ENCODE measurements at regions of chr12 and their contacts with region 1.

Region 1: GRCh38 chr12:52924764-52925716 is 20.2 kb upstream of the KRT8 start:
- DNase-seq: peak; percentile 78 to 94
- H3K4me3 ChIP-seq: peak overlapping the region; percentile 53
- H3K27ac ChIP-seq: peak overlapping the region; percentile 100
- H3K4me1 ChIP-seq: peaks cover 80% of the 10 kb centered on the region
- H3K27me3 ChIP-seq: no peaks in the 10 kb centered on the region
- CTCF ChIP-seq: no peak

Region 2: GRCh38 chr12:52050761-52051541 is 874.1 kb before region 1 on chr12 and contains the start of gene NR4A1:
- CTCF ChIA-PET with region 1: no interaction called
- POLR2A ChIA-PET with region 1: interaction called, 22 read pairs
- intact Hi-C with region 1: no loop called
- DNase-seq: peak; percentile 66 to 94
- H3K4me3 ChIP-seq: peak within 1 kb of the TSS; percentile 64
- H3K27ac ChIP-seq: no peak within 1 kb of the TSS
- H3K4me1 ChIP-seq: peaks cover 20% of the 10 kb centered on the region
- H3K27me3 ChIP-seq: no peaks in the 10 kb centered on the region
- CTCF ChIP-seq: no peak
- total RNA-seq, gene NR4A1: 6.5 and 13.4 TPM in 2 replicates

Region 3: GRCh38 chr12:52895061-52895887 is 29.8 kb before region 1 on chr12:
- CTCF ChIA-PET with region 1: no interaction called
- POLR2A ChIA-PET with region 1: interaction called, 19 read pairs
- intact Hi-C with region 1: no loop called
- DNase-seq: peak; percentile 84 to 92
- H3K4me3 ChIP-seq: no peak overlapping the region
- H3K27ac ChIP-seq: peak overlapping the region; percentile 93
- H3K4me1 ChIP-seq: peaks cover 56% of the 10 kb centered on the region
- H3K27me3 ChIP-seq: no peaks in the 10 kb centered on the region
- CTCF ChIP-seq: no peak

Region 4: DNA sequence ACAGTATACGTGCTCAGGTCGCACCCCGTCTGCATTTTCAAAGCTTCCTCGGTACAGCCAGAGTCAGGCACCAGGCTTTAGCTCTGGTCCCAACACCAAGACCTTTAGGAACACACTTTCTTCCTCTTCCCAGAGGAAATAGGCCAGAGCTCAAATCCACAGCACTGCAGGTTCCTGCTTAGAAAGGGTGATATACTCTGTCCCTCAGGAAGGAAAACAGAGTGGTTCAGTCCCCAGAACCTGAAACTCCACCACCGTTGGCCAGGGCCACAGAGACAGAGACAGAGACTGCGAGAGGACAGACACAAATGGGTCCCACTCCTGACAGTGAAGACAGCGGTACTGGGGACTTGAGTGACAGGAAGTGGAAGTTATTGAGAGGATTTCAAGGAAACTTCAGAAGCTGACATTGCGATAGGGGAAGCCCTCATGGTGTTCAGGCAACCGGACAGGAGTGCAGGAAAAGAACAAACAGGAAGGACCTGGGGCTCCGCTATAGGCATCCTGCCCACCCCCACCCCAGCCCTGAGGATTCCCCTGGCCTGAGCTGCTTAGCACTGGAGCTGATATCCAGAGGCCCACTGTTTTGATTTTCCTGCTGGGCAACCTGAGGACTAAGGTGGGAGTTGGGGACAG is 14.7 kb before region 1 on chr12:
- CTCF ChIA-PET with region 1: interaction called, 10 read pairs
- POLR2A ChIA-PET with region 1: interaction called, 354 read pairs
- intact Hi-C with region 1: loop called (anchors 1 kb)
- DNase-seq: no peak
- H3K4me3 ChIP-seq: no peak overlapping the region
- H3K27ac ChIP-seq: peak overlapping the region; percentile 99; the same call in 1 of the 2 replicates
- H3K4me1 ChIP-seq: peaks cover 55% of the 10 kb centered on the region
- H3K27me3 ChIP-seq: no peaks in the 10 kb centered on the region
- CTCF ChIP-seq: no peak

Region 5: GRCh38 chr12:52969828-52970569 is 45.0 kb after region 1 on chr12:
- CTCF ChIA-PET with region 1: interaction called, 10 read pairs
- POLR2A ChIA-PET with region 1: interaction called, 18 read pairs
- intact Hi-C with region 1: loop called (anchors 1 kb)
- DNase-seq: peak; percentile 90 to 98
- H3K4me3 ChIP-seq: peak overlapping the region; percentile 28; the same call in 1 of the 2 replicates
- H3K27ac ChIP-seq: peak overlapping the region; percentile 99
- H3K4me1 ChIP-seq: peaks cover 67% of the 10 kb centered on the region
- H3K27me3 ChIP-seq: no peaks in the 10 kb centered on the region
- CTCF ChIP-seq: no peak

Measured in PC-9 (cell line).